PC-9 (cell line): ENCODE measurements at regions of chr1 and their contacts with region 1.

Region 1: GRCh38 chr1:31669786-31670592 is 25.3 kb upstream of the PEF1 start:
- DNase-seq: peak; percentile 88 to 96
- H3K4me3 ChIP-seq: peak overlapping the region; percentile 40; the same call in 1 of the 2 replicates
- H3K27ac ChIP-seq: peak overlapping the region; percentile 46
- H3K4me1 ChIP-seq: peaks cover 51% of the 10 kb centered on the region
- H3K27me3 ChIP-seq: no peaks in the 10 kb centered on the region
- CTCF ChIP-seq: peak; percentile 58; the same call in 1 of the 2 replicates

Region 2: DNA sequence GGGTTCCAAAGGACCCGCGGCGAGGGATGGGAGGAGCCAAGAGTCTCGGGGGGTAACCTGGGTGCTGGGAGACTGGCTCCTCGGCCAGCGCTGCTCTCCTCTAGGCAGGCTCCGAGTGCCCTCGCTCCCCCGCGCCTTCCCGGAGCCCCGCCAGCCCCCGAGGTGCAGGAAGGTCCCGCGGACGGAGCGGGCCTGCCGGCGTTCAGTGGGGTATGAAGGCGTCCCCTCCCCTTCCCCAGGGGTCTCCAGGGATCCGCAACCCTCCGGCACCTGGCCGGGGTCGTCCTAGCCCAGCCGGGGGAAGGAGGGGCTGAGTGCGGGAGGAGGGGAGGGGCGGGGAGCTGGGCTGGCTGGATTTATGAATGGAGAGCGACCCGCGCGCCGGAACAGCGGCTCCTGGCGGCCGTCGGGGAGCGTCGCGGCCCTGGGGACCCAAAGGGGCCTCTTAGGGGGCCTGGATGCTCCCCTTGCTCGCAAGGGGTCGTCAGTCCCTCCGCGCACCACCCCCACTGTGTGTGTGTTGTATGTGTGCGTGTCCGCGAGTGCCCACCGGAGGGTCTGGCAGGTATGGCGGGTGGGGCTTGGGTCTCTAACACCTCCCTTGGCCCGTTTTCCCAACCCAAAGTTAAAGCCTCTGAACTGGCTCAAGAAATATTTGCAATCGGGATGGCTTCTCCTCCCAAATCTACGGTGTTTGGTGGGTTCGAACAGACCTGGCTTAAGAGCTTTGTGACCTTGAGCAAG is 51.9 kb before region 1 on chr1:
- CTCF ChIA-PET with region 1: no interaction called
- POLR2A ChIA-PET with region 1: no interaction called
- intact Hi-C with region 1: no loop called
- DNase-seq: peak in 1 of 2 experiments; percentile 43
- H3K4me3 ChIP-seq: peak overlapping the region; percentile 75
- H3K27ac ChIP-seq: no peak overlapping the region
- H3K4me1 ChIP-seq: no peaks in the 10 kb centered on the region
- H3K27me3 ChIP-seq: no peaks in the 10 kb centered on the region
- CTCF ChIP-seq: peak; percentile 98

Region 3: DNA sequence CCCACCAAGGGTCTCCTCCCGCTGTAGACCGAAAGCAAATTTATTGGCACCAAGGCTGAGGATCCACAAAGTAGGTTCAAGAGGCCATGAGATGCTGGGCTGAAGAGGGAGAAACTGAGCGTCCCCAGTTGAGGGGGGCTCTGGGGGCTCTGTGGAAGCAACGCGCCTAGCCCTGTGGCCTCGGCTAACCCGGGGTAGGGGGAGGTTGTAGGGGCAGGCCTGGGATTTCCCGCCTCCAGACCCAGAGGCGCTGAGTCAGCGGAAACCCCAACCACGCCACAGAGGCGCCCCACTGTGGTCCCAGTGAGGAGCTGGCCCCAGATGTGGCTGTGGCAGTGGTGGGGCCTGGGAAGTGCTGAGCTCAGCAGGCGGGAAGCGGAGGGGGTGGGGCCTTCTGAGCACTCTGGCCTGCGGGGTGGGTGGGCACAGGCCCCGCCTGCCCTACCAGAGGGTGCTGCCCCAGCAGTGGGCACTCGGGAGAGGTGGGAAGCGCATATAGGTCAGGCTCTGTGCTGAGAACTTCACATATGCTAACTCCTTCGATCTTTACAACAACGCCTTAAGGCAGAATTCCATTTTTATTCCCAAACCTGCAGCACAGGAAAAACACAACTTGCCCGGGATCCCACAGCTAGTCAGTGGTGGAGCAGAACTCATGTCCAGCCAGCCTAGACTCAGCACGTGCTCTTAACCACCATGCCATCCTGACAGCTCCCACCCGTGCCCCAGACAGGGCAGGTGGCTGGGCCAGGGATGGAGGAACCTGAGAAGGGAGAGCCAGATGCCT is 35.3 kb after region 1 on chr1:
- CTCF ChIA-PET with region 1: interaction called, 10 read pairs
- POLR2A ChIA-PET with region 1: interaction called, 3 read pairs
- intact Hi-C with region 1: loop called (anchors 5 kb)
- DNase-seq: no peak
- H3K4me3 ChIP-seq: no peak overlapping the region
- H3K27ac ChIP-seq: no peak overlapping the region
- H3K4me1 ChIP-seq: peaks cover 49% of the 10 kb centered on the region
- H3K27me3 ChIP-seq: no peaks in the 10 kb centered on the region
- CTCF ChIP-seq: peak; percentile 53; the same call in 1 of the 2 replicates

Region 4: GRCh38 chr1:31745096-31745945 is 75.3 kb after region 1 on chr1:
- CTCF ChIA-PET with region 1: interaction called, 3 read pairs
- POLR2A ChIA-PET with region 1: interaction called, 10 read pairs
- intact Hi-C with region 1: no loop called
- DNase-seq: peak; percentile 61 to 68
- H3K4me3 ChIP-seq: no peak overlapping the region
- H3K27ac ChIP-seq: no peak overlapping the region
- H3K4me1 ChIP-seq: no peaks in the 10 kb centered on the region
- H3K27me3 ChIP-seq: no peaks in the 10 kb centered on the region
- CTCF ChIP-seq: peak; percentile 98